WTC11 (cell line): ENCODE measurements at regions of chr14 and their contacts with region 1.

Region 1: DNA sequence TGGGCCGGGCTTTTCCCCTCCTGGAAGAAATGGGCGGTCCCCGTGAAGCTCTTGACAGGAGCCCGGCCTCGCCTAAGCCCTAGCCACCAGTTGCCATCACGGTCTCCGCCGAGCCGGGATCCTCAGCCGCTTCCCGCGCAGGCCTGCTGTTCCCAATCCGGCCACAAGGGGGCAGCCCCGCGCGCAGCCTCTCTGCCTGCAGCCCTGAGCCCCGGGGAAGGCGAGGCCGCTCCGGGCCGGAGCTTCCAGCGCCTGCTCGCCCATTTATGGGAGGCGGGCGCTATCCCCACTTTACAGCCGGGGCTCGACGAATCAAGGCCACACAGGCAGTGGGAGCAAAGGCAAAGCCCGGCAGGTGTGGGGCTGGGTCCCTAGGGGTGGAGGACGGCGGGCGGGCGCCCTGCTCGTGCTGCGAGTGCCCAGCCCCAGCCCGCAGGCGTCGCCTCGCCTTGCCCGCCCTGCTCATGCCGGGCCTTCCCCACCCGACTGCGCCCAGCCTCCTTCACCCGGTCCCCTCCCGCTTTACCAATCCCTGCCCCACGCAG is 61.5 kb downstream of the LGMN start:
- DNase-seq: peak; percentile 94
- ATAC-seq: peak; percentile 83
- H3K4me3 Mint-ChIP-seq: peak overlapping the region; percentile 45
- H3K27ac Mint-ChIP-seq: no peak overlapping the region
- H3K4me1 Mint-ChIP-seq: no peaks in the 10 kb centered on the region
- H3K27me3 Mint-ChIP-seq: peaks cover 25% of the 10 kb centered on the region
- CTCF ChIP-seq: peak; percentile 99

Region 2: GRCh38 chr14:92532505-92533163 is 154.3 kb before region 1 on chr14:
- CTCF ChIA-PET with region 1: no interaction called
- POLR2A ChIA-PET with region 1: no interaction called
- DNase-seq: no peak
- ATAC-seq: no peak
- H3K4me3 Mint-ChIP-seq: no peak overlapping the region
- H3K27ac Mint-ChIP-seq: no peak overlapping the region
- H3K4me1 Mint-ChIP-seq: no peaks in the 10 kb centered on the region
- H3K27me3 Mint-ChIP-seq: no peaks in the 10 kb centered on the region
- CTCF ChIP-seq: no peak

Region 3: GRCh38 chr14:92596331-92596911 is 90.6 kb before region 1 on chr14:
- CTCF ChIA-PET with region 1: interaction called, 25 read pairs
- POLR2A ChIA-PET with region 1: no interaction called
- DNase-seq: no peak
- ATAC-seq: peak; percentile 84
- H3K4me3 Mint-ChIP-seq: no peak overlapping the region
- H3K27ac Mint-ChIP-seq: no peak overlapping the region
- H3K4me1 Mint-ChIP-seq: 0 out of 2 replicates have a peak, but pooled peaks cover 3% of the 10 kb centered on the region
- H3K27me3 Mint-ChIP-seq: peaks cover 2% of the 10 kb centered on the region; the same call in 1 of the 2 replicates
- CTCF ChIP-seq: no peak

Region 4: GRCh38 chr14:92698393-92698792 is 11.4 kb after region 1 on chr14:
- CTCF ChIA-PET with region 1: interaction called, 11 read pairs
- POLR2A ChIA-PET with region 1: interaction called, 3 read pairs
- DNase-seq: no peak
- ATAC-seq: no peak
- H3K4me3 Mint-ChIP-seq: no peak overlapping the region
- H3K27ac Mint-ChIP-seq: no peak overlapping the region
- H3K4me1 Mint-ChIP-seq: no peaks in the 10 kb centered on the region
- H3K27me3 Mint-ChIP-seq: peaks cover 2% of the 10 kb centered on the region
- CTCF ChIP-seq: no peak

Region 5: GRCh38 chr14:92748259-92749016 is 61.5 kb after region 1 on chr14 and contains the start of gene LGMN:
- CTCF ChIA-PET with region 1: interaction called, 11 read pairs
- POLR2A ChIA-PET with region 1: no interaction called
- DNase-seq: peak; percentile 97
- ATAC-seq: peak; percentile 100
- H3K4me3 Mint-ChIP-seq: peak within 1 kb of the TSS; percentile 84
- H3K27ac Mint-ChIP-seq: peak within 1 kb of the TSS; percentile 50
- H3K4me1 Mint-ChIP-seq: peaks cover 19% of the 10 kb centered on the region
- H3K27me3 Mint-ChIP-seq: peaks cover 28% of the 10 kb centered on the region
- CTCF ChIP-seq: no peak
- total RNA-seq, gene LGMN: 55.7 to 68.0 TPM (median 66.1 TPM) in 3 replicates

Region 6: DNA sequence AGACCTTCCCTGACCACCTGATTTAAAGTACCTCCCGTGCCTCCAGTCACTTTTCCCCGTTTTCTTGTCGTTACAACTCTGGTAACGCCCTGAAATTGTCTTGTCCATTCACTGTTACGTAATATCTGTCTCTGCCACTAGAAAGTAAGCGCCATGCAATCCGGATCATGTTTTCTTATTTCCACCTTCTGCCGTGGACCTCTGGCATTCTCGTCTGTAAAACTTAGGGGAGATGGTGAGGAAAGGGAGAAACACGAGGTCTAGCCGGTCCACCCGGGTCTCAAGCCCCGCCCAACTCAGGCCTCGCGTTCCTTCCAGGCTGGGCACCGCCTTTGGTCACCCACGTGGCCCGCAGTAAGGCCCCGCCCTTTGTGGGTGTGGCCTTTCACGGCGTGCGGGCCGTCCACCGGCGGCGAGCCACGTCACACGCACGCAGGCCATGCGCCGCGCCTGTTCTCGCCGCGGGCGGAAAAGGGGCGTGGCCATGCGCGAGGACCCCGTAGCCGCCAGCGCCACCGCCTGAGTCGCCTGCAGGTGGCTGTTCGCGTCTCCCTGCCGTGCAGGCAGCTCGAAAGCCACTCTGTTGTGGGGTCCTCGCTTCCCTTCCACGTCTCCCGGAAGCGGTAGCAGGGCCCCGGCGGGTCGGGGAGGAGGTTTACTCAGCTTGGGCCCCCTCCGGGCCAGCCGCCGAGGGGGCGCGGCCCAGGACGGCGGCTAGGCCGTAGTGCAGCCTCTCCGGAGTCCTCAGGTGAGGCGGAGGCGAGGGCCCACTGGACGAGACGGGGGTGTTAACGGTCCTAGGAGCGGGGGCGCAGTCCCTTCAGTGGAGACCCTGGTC is 107.0 kb after region 1 on chr14 and contains the start of gene GOLGA5:
- CTCF ChIA-PET with region 1: interaction called, 14 read pairs
- POLR2A ChIA-PET with region 1: no interaction called
- DNase-seq: peak; percentile 96
- ATAC-seq: peak; percentile 97
- H3K4me3 Mint-ChIP-seq: peak within 1 kb of the TSS; percentile 97
- H3K27ac Mint-ChIP-seq: peak within 1 kb of the TSS; percentile 97
- H3K4me1 Mint-ChIP-seq: peaks cover 23% of the 10 kb centered on the region
- H3K27me3 Mint-ChIP-seq: peaks cover 16% of the 10 kb centered on the region
- CTCF ChIP-seq: no peak
- total RNA-seq, gene GOLGA5: 23.8 to 27.0 TPM (median 25.0 TPM) in 3 replicates

Region 7: DNA sequence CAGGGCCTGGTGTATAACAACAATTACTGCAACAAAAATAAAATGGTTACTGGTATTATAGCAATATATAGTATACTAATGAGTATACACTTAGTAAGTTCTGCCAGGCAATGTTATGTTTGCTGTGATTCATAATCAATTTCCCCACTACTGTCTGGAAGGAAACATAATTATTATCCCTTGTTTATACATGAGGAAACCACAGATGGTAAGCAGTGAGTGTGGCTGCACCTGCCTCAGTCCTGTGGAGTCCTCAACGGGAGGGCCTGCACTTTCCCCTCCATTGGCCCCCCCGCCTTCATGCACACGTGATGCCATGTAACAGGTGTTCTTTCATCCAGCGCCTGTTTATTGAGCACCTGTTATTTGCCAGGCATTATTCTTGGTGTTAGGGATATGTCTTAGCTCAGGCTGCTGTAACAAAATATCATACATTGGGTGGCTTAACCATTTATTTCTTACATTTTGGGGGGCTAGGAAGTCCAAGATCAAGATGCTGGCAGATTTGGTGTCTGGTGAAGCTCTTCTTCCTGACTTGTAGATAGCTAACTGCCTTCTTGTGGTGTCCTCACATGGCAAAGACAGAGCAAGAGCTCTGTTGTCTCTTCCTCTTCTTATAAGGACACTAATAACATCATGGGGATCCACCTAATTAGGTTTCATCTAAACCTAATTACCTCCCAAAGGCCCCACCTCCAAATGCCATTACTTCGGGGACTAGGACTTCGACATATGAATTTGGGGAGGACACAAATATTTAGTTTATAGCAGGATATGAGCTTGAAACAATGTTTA is 176.5 kb after region 1 on chr14:
- CTCF ChIA-PET with region 1: no interaction called
- POLR2A ChIA-PET with region 1: no interaction called
- DNase-seq: no peak
- ATAC-seq: no peak
- H3K4me3 Mint-ChIP-seq: no peak overlapping the region
- H3K27ac Mint-ChIP-seq: no peak overlapping the region
- H3K4me1 Mint-ChIP-seq: peaks cover 9% of the 10 kb centered on the region; the same call in 1 of the 2 replicates
- H3K27me3 Mint-ChIP-seq: no peaks in the 10 kb centered on the region
- CTCF ChIP-seq: no peak

Region 8: DNA sequence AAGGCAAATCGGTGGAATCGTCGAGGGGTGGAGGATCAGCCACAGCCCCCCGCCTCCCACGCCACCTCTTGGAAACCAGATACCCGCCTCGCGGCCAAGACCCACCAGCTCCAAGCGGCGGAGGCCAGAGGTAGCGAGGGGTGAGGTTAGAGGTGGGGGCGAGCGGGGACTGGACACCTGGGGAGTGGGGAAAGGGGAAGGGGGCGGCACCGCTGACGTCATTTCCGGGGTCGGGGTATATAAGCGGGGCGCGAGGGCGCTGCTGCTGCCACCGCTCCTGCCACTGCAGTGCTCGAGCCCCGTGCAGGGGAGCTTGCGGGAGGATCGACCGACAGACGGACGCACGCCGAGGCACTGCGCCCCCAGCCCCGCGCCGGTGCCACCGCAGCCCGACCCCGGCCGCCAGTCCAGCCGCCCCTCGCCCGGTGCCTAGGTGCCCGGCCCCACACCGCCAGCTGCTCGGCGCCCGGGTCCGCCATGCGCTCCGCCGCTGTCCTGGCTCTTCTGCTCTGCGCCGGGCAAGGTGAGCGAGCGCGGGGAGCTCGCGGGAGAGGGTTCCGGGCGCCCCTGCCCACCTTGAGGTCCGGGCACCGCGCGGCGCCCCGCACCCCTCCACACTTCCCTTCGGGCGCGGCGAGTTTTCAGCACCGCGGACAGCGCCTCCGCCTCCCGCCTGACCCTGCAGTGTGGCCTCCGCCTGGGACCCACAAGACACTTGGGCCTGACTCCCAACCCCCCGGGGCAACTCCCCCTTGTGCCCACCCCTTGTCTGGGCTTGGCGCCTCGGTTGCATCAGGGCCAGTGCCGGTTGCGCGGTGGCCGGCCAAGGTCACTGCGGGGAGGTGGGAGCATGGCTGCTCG is 236.1 kb after region 1 on chr14 and contains the start of gene CHGA:
- CTCF ChIA-PET with region 1: no interaction called
- POLR2A ChIA-PET with region 1: no interaction called
- DNase-seq: peak; percentile 86
- ATAC-seq: peak; percentile 84
- H3K4me3 Mint-ChIP-seq: peak within 1 kb of the TSS; percentile 86
- H3K27ac Mint-ChIP-seq: no peak within 1 kb of the TSS
- H3K4me1 Mint-ChIP-seq: peaks cover 23% of the 10 kb centered on the region
- H3K27me3 Mint-ChIP-seq: peaks cover 78% of the 10 kb centered on the region
- CTCF ChIP-seq: no peak
- total RNA-seq, gene CHGA: 8.5 to 17.2 TPM (median 17.1 TPM) in 3 replicates